ENCODE measurements at regions of chr1 and their contacts with region 1.

Region 1: GRCh38 chr1:147890177-147890790 is 12.3 kb upstream of the GJA8 start:
- DNase-seq: peak in 5 of 10 donors; percentile 12 to 54 (median 31)
- H3K4me3 ChIP-seq: no peak overlapping the region
- H3K27ac ChIP-seq: no peak overlapping the region
- H3K27me3 ChIP-seq: no peaks in the 10 kb centered on the region
- CTCF ChIP-seq: peak in 51 of 56 donors; percentile 16 to 68 (median 42)

Region 2: GRCh38 chr1:147273409-147274336 is 616.6 kb before region 1 on chr1:
- intact Hi-C with region 1: loop called (anchors 5 to 10 kb)
- DNase-seq: peak in 2 of 10 donors; percentile 16 to 18
- H3K4me3 ChIP-seq: no peak overlapping the region
- H3K27ac ChIP-seq: peak overlapping the region in 9 of 59 donors; percentile 4 to 56 (median 32)
- H3K27me3 ChIP-seq: no peaks in the 10 kb centered on the region
- CTCF ChIP-seq: peak; percentile 59 to 92 (median 76)

Region 3: GRCh38 chr1:147647796-147648633 is 242.3 kb before region 1 on chr1:
- intact Hi-C with region 1: loop called in 1 of 2 experiments (anchors 5 kb)
- DNase-seq: no peak
- H3K4me3 ChIP-seq: no peak overlapping the region
- H3K27ac ChIP-seq: no peak overlapping the region
- H3K27me3 ChIP-seq: no peaks in the 10 kb centered on the region
- CTCF ChIP-seq: no peak

Region 4: GRCh38 chr1:147723691-147724323 is 166.5 kb before region 1 on chr1:
- intact Hi-C with region 1: loop called in 1 of 2 experiments (anchors 10 kb)
- DNase-seq: no peak
- H3K4me3 ChIP-seq: no peak overlapping the region
- H3K27ac ChIP-seq: no peak overlapping the region
- H3K27me3 ChIP-seq: peaks cover 0 to 35% (median 5%) of the 10 kb centered on the region in 45 donors
- CTCF ChIP-seq: peak in 47 of 56 donors; percentile 12 to 62 (median 38)

Measured in dorsolateral prefrontal cortex (tissue), 120 donors.